Vagina (tissue), 2 donors: ENCODE measurements at regions of chr12 and their contacts with region 1.

Region 1: DNA sequence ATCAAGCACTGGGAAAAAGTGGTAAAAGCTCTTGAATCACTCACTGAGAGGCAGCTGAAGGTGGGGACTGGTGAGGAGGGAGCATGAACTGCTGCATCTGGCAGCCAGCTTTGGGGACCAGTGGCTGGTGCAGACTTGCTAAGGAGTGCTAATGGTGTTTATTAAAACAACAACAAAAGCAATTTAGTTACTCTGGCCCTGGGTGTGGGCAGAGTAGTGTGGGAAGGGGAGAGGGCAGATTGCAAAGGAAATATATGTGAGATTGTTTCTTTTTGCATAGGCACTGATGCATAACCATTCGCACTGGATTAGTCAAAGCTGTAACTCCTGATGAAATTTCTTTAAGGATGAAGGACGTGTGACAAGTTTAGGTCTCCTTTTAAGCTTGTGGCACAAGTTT is 8.1 kb downstream of the TXNRD1 start:
- DNase-seq: no peak
- H3K4me3 ChIP-seq: no peak overlapping the region
- H3K27ac ChIP-seq: no peak overlapping the region
- H3K4me1 ChIP-seq: peaks cover 18% of the 10 kb centered on the region
- H3K27me3 ChIP-seq: no peaks in the 10 kb centered on the region
- CTCF ChIP-seq: no peak
- POLR2A ChIP-seq: no peak

Region 2: GRCh38 chr12:104282109-104282508 is 58.4 kb after region 1 on chr12:
- intact Hi-C with region 1: loop called (anchors 2 kb)
- DNase-seq: no peak
- H3K4me3 ChIP-seq: no peak overlapping the region
- H3K27ac ChIP-seq: no peak overlapping the region
- H3K4me1 ChIP-seq: peaks cover 13% of the 10 kb centered on the region
- H3K27me3 ChIP-seq: no peaks in the 10 kb centered on the region
- CTCF ChIP-seq: no peak
- POLR2A ChIP-seq: no peak